Gastrocnemius medialis (tissue), 4 donors: ENCODE measurements at regions of chr21 and their contacts with region 1.

Region 1: DNA sequence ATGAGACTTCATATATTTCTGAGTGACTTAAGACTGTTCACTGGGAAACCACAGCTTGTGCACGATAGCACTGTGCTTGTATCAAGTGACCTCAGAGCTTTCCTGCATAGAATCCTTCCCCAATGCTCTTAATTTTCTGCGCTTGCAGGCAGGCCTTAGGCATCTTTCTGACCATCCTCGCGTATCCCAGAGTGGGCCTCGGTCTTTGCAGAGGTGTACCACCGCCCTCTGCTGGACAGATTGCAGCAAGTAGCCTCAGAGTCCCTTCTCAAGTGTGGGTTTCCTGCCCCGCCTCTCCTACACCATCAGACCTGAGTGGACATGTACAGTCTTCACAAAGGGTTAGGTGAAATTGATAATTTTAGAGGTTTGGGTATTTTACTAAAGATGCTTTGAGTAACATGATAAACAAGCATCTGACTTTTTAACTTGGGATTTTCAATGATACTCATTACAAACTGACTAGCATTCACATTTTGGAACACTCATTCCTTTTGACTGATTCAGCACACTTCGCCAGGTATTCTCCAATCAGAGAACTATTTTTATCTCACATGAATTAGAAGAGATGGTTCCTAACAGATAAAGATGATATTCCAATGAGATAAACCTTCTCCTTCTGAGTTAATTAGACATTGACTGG is 246.5 kb upstream of the USP25 start:
- DNase-seq: peak; percentile 80 to 81
- ATAC-seq: peak; percentile 96 to 98
- H3K4me3 ChIP-seq: no peak overlapping the region
- H3K27ac ChIP-seq: no peak overlapping the region
- H3K4me1 ChIP-seq: peaks cover 0 to 10% of the 10 kb centered on the region in 2 donors
- H3K27me3 ChIP-seq: no peaks in the 10 kb centered on the region
- CTCF ChIP-seq: peak; percentile 83 to 95 (median 87)
- POLR2A ChIP-seq: no peak

Region 2: DNA sequence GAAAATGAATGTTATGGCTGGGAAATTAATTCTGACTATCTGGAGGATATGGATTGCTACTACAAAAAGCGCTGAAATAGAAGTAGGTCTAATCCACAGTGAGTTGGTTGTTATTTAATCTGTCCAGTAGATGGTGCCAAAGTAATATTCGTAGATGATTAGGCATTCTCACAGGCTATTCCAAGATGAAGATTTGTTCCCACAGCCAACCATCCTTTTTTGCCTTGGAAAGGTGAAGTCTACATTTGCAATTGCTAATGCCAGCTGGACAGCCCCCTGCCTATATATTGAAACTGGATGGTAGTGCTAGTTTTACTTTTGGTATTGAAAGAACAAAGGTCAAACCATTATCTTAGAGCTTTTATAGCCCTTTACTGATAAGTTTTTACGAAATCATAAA is 1223.5 kb before region 1 on chr21:
- in situ Hi-C with region 1: no loop called
- intact Hi-C with region 1: loop called (anchors 10 kb)
- DNase-seq: no peak
- ATAC-seq: peak; percentile 56 to 75
- H3K4me3 ChIP-seq: no peak overlapping the region
- H3K27ac ChIP-seq: no peak overlapping the region
- H3K4me1 ChIP-seq: no peaks in the 10 kb centered on the region
- H3K27me3 ChIP-seq: peaks cover 0 to 2% (median 0%) of the 10 kb centered on the region in 3 donors
- CTCF ChIP-seq: peak in 4 of 5 experiments; percentile 36 to 65 (median 46)
- POLR2A ChIP-seq: no peak

Region 3: GRCh38 chr21:14858311-14858710 is 624.9 kb before region 1 on chr21:
- in situ Hi-C with region 1: loop called in 2 of 4 experiments (anchors 5 kb)
- intact Hi-C with region 1: no loop called
- DNase-seq: no peak
- ATAC-seq: no peak
- H3K4me3 ChIP-seq: no peak overlapping the region
- H3K27ac ChIP-seq: no peak overlapping the region
- H3K4me1 ChIP-seq: no peaks in the 10 kb centered on the region
- H3K27me3 ChIP-seq: no peaks in the 10 kb centered on the region
- CTCF ChIP-seq: no peak
- POLR2A ChIP-seq: no peak

Region 4: DNA sequence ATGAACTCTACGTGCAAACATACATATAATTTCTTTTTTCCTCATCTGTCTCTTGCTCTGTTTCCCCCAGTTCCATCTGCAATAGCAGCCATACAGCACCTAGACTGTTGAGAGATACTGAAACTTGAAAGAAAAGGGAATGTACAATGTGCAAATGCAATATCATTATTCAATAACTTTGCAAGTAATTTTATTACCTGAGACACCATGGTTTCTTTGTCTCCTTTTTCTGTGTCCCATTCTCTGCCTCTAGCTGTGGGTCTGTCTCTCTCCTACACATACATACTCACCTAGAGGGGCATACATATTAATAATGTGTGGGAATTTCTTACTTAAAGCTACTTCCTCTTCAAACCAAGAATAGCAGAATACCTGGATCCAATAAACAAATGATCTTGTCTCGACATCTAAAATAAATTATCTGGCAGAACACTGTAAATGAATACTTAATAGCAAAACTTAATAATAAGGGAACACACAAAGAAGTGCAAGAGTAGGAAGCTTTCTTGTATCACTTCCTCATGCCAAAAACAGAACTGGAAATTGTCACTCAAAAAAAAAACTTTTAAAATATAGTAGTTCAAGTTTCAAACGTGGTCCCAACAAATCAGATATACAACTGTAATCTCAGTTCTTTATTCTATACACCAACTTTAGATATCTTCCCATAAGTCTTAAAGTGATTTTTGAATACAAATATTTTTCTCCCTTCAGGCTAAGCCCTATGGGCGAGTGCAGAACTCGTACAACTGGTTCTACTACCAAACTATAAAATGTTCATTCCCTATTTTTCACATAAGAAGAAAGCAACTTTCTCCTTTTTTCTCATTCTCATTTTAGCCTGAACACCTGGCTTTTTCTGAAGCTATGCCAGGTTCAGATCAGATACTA is 613.0 kb before region 1 on chr21:
- in situ Hi-C with region 1: loop called in 1 of 4 experiments (anchors 5 kb)
- intact Hi-C with region 1: no loop called
- DNase-seq: no peak
- ATAC-seq: no peak
- H3K4me3 ChIP-seq: no peak overlapping the region
- H3K27ac ChIP-seq: no peak overlapping the region
- H3K4me1 ChIP-seq: peaks cover 4 to 5% of the 10 kb centered on the region in 2 donors
- H3K27me3 ChIP-seq: no peaks in the 10 kb centered on the region
- CTCF ChIP-seq: no peak
- POLR2A ChIP-seq: no peak

Region 5: DNA sequence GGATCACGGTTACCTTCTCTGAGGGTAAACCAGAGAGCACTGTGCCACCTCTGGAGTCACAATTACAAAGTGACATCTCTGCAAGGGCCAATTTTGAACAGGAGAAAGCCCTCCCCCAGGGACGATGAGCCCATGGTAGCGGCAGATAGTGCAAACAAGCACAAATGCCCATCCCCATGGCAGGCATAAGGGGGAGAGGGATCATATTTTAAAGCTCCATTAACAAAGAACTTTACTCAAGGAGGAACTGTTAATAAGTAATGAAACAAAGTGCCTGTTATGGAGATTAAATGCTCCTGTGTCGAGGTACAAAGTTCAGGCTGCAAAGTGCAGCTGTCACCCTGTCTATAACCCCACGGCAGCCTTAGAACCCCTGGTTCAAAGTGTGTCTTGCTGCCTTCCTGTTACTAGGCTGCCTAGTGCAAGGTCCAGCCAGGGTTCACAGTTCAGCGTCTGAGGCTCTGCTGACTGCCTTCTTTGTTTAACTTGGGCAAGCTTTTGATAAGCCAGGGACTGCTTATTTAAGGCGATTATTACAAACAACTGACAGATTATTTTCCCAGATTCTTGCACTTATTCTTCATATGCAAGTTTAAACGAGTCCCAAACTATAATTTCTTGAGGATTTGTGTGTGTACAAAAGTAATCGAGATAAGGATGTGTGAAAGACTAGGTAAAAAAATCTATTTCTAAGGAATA is 342.8 kb before region 1 on chr21:
- in situ Hi-C with region 1: loop called in 1 of 4 experiments (anchors 25 kb)
- intact Hi-C with region 1: no loop called
- DNase-seq: no peak
- ATAC-seq: no peak
- H3K4me3 ChIP-seq: no peak overlapping the region
- H3K27ac ChIP-seq: no peak overlapping the region
- H3K4me1 ChIP-seq: peaks cover 43 to 48% of the 10 kb centered on the region in 2 donors
- H3K27me3 ChIP-seq: no peaks in the 10 kb centered on the region
- CTCF ChIP-seq: no peak
- POLR2A ChIP-seq: no peak